PC-9 (cell line): ENCODE measurements at regions of chr2 and their contacts with region 1.

Region 1: GRCh38 chr2:28894470-28895177 is at the start of gene WDR43:
- DNase-seq: peak; percentile 98 to 99
- H3K4me3 ChIP-seq: peak within 1 kb of the TSS; percentile 98
- H3K27ac ChIP-seq: peak within 1 kb of the TSS; percentile 71
- H3K4me1 ChIP-seq: peaks cover 34% of the 10 kb centered on the region
- H3K27me3 ChIP-seq: no peaks in the 10 kb centered on the region
- CTCF ChIP-seq: no peak
- total RNA-seq, gene WDR43: 37.1 and 57.9 TPM in 2 replicates

Region 2: GRCh38 chr2:28566521-28567041 is 328.0 kb before region 1 on chr2:
- CTCF ChIA-PET with region 1: no interaction called
- POLR2A ChIA-PET with region 1: no interaction called
- intact Hi-C with region 1: loop called (anchors 10 kb)
- DNase-seq: peak; percentile 64 to 89
- H3K4me3 ChIP-seq: peak overlapping the region; percentile 79
- H3K27ac ChIP-seq: no peak overlapping the region
- H3K4me1 ChIP-seq: peaks cover 6% of the 10 kb centered on the region
- H3K27me3 ChIP-seq: no peaks in the 10 kb centered on the region
- CTCF ChIP-seq: peak; percentile 100

Region 3: GRCh38 chr2:28801726-28802487 is 92.7 kb before region 1 on chr2:
- CTCF ChIA-PET with region 1: no interaction called
- POLR2A ChIA-PET with region 1: interaction called, 12 read pairs
- intact Hi-C with region 1: no loop called
- DNase-seq: peak in 1 of 2 experiments; percentile 68
- H3K4me3 ChIP-seq: no peak overlapping the region
- H3K27ac ChIP-seq: peak overlapping the region; percentile 91
- H3K4me1 ChIP-seq: peaks cover 32% of the 10 kb centered on the region
- H3K27me3 ChIP-seq: no peaks in the 10 kb centered on the region
- CTCF ChIP-seq: no peak

Region 4: DNA sequence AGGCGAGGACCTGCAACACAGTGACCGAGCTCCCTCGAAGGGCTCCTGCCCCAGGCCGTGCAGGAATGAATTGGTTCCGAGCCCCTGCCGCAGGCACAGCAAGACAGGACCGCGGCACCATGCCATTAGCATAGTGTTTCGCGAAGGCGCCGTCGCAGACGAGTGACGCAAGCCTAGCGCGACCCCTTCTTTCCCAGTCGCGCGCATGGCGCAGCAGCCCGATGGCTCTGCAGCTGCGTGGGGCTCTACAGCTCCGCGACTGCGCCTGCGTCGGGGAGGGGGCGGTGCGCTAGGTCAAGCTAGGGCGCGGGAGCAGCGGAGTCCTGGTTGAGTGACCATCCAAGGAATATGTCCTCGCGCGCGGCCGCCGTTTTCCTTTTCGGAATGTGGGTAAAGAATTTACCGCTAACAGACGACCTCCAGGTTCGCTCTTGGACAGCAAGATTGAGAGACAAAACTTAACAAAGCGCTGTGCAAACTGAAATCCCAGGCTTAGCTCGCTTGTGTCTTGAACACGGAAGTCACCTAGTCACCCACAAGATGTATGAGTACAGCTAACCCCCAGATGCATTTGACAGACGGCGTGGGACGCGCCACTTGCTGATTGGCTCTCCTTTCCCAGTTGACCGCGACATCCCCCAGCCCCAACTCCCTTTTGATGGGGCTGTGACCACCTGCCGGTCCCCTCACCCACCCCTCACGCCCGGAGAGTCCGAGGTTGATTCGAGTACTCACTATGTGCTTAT is 24.3 kb before region 1 on chr2 and contains the start of gene TRMT61B:
- CTCF ChIA-PET with region 1: no interaction called
- POLR2A ChIA-PET with region 1: interaction called, 4 read pairs
- intact Hi-C with region 1: loop called (anchors 1 kb)
- DNase-seq: peak; percentile 90 to 95
- H3K4me3 ChIP-seq: peak within 1 kb of the TSS; percentile 80
- H3K27ac ChIP-seq: peak within 1 kb of the TSS; percentile 46; the same call in 1 of the 2 replicates
- H3K4me1 ChIP-seq: peaks cover 16% of the 10 kb centered on the region
- H3K27me3 ChIP-seq: no peaks in the 10 kb centered on the region
- CTCF ChIP-seq: no peak
- total RNA-seq, gene TRMT61B: 15.7 and 21.1 TPM in 2 replicates

Region 5: GRCh38 chr2:28944535-28945248 is 50.1 kb after region 1 on chr2:
- CTCF ChIA-PET with region 1: no interaction called
- POLR2A ChIA-PET with region 1: no interaction called
- intact Hi-C with region 1: no loop called
- DNase-seq: no peak
- H3K4me3 ChIP-seq: no peak overlapping the region
- H3K27ac ChIP-seq: no peak overlapping the region
- H3K4me1 ChIP-seq: no peaks in the 10 kb centered on the region
- H3K27me3 ChIP-seq: no peaks in the 10 kb centered on the region
- CTCF ChIP-seq: no peak